ENCODE measurements at regions of chr11 and their contacts with region 1.

Region 1: DNA sequence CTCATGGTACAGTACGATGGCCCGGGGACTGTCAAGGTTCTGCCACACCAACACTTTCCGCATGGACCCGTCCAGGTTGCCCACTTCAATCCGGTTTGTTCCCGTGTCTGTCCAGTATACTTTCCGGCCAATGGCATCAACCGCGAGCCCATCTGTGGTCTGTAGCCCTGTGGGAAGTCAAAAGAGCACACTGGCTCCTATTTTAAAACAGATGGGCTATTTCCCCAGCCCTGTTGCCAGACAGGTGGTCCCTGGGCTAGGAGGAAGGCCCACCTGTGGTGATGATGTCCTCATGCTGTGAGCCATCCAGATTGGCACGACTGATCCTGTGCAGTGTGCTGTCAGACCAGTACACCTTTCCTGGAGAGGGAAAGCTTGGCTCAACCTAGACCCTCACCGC is 30.4 kb upstream of the CKAP5 start:
- DNase-seq: no peak
- H3K4me3 ChIP-seq: no peak overlapping the region
- H3K27ac ChIP-seq: no peak overlapping the region
- H3K4me1 ChIP-seq: no peaks in the 10 kb centered on the region
- H3K27me3 ChIP-seq: no peaks in the 10 kb centered on the region
- CTCF ChIP-seq: no peak
- POLR2A ChIP-seq: no peak

Region 2: GRCh38 chr11:46800177-46800576 is 76.3 kb before region 1 on chr11:
- CTCF ChIA-PET with region 1: no interaction called
- POLR2A ChIA-PET with region 1: no interaction called
- dilution Hi-C with region 1: no loop called
- intact Hi-C with region 1: no loop called
- DNase-seq: peak; percentile 42
- H3K4me3 ChIP-seq: no peak overlapping the region
- H3K27ac ChIP-seq: no peak overlapping the region
- H3K4me1 ChIP-seq: peaks cover 19% of the 10 kb centered on the region
- H3K27me3 ChIP-seq: no peaks in the 10 kb centered on the region
- CTCF ChIP-seq: no peak
- POLR2A ChIP-seq: no peak

Region 3: GRCh38 chr11:46865340-46865739 is 11.1 kb before region 1 on chr11:
- CTCF ChIA-PET with region 1: interaction called, 10 read pairs
- POLR2A ChIA-PET with region 1: no interaction called
- dilution Hi-C with region 1: no loop called
- intact Hi-C with region 1: no loop called
- DNase-seq: peak; percentile 12
- H3K4me3 ChIP-seq: no peak overlapping the region
- H3K27ac ChIP-seq: no peak overlapping the region
- H3K4me1 ChIP-seq: no peaks in the 10 kb centered on the region
- H3K27me3 ChIP-seq: no peaks in the 10 kb centered on the region
- CTCF ChIP-seq: no peak
- POLR2A ChIP-seq: no peak

Measured in endothelial cell of umbilical vein (primary cell).